Dendritic cell treated with granulocyte-macrophage colony-stimulating factor and Interleukin-4, amounts not matched to agents 40 ng/mL and 50 ng/mL, for 4 days (primary cell): ENCODE measurements at regions of chr15 and their contacts with region 1.

Region 1: DNA sequence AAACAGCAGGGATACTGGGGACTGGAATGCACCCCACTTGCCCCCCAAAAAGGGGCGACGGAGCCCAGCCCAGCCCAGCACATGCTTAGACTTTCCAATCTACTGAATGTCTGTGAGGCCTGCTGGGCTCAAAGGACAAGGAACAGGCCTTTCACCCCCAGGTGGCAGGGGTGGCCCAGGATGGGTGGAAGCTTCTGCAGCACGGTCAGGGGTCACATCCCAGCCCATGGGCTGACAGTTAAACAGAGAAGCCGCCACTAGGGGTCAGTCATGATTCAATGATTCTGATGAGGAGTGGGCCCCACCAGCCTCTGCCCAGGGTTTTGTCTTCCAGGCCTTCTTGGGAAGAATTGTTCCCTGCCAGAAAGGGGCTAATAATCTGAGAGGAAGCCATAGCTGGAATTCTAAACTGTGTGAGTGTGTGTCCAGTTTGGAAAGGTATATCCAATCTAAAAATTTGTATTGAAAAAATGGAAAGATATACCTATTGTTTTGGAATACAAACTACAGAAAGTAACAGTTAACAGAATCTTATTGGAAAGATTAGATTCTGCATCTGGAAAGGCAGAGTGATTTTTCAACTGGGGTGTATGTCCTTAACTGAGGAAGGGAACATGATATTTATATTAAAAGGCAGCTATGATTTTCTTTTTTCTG is 2.2 kb downstream of the CHRNB4 start:
- H3K4me3 Mint-ChIP-seq: no peak overlapping the region
- H3K27ac Mint-ChIP-seq: no peak overlapping the region
- H3K4me1 Mint-ChIP-seq: peaks cover 7% of the 10 kb centered on the region
- H3K27me3 Mint-ChIP-seq: peaks cover 32% of the 10 kb centered on the region

Region 2: GRCh38 chr15:78599189-78599588 is 39.6 kb before region 1 on chr15:
- intact Hi-C with region 1: no loop called
- H3K4me3 Mint-ChIP-seq: no peak overlapping the region
- H3K27ac Mint-ChIP-seq: no peak overlapping the region
- H3K4me1 Mint-ChIP-seq: no peaks in the 10 kb centered on the region
- H3K27me3 Mint-ChIP-seq: no peaks in the 10 kb centered on the region

Region 3: GRCh38 chr15:78709263-78709882 is 70.6 kb after region 1 on chr15:
- intact Hi-C with region 1: loop called (anchors 1 kb)
- H3K4me3 Mint-ChIP-seq: peak overlapping the region; percentile 17
- H3K27ac Mint-ChIP-seq: no peak overlapping the region
- H3K4me1 Mint-ChIP-seq: peaks cover 9% of the 10 kb centered on the region
- H3K27me3 Mint-ChIP-seq: peaks cover 32% of the 10 kb centered on the region